Activated CD8-positive, alpha-beta T cell treated with anti-CD3 and anti-CD28 coated beads for 36 hours (primary cell): ENCODE measurements at regions of chr12 and their contacts with region 1.

Region 1: DNA sequence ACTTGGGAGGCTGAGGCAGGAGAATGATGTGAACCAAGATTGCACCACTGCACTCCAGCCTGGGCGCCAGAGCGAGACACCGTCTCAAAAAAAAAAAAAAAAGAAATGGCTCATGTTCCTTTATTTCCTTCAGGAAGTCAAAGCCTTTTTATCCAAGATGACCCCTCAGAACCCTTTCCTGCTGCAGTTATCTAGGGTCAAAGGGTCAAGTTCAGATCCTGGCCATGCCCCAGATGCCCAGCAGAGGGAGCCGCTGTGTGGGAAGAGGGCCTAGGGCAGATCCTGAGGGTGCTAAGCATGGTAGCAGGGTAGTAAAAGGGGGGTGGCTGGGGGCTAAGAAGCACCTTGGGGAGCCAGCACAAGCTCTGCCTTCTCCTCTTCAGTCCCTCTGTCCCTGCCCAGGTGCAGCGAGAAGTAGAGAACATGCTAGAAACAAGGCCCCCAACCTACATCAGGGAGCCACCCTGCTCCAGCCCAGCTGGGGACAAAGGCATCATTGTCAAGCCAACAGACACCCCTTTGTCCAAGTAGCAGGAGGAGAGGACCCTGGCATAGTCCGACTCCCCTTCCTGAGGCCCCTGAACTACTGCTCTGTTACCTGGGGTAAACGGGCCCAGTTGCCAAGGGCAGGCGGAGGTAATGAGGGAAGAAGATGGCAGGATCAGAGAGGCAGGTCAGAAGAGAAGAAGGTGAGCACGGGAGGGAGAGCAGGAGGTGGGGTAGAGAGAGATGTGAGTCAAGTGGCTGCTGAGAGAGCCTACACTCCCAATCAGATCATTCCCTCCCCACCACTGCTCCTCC is 6.5 kb downstream of the NFE2 start:
- DNase-seq: peak; percentile 77
- ATAC-seq: peak; percentile 88
- H3K4me3 Mint-ChIP-seq: no peak overlapping the region
- H3K27ac Mint-ChIP-seq: no peak overlapping the region
- H3K4me1 Mint-ChIP-seq: peaks cover 4% of the 10 kb centered on the region
- H3K27me3 Mint-ChIP-seq: peaks cover 13% of the 10 kb centered on the region
- CTCF ChIP-seq: peak; percentile 79

Region 2: GRCh38 chr12:54251667-54252284 is 42.6 kb before region 1 on chr12:
- CTCF ChIA-PET with region 1: interaction called, 12 read pairs
- POLR2A ChIA-PET with region 1: interaction called, 4 read pairs
- intact Hi-C with region 1: no loop called
- DNase-seq: peak; percentile 22
- ATAC-seq: peak; percentile 62
- H3K4me3 Mint-ChIP-seq: no peak overlapping the region
- H3K27ac Mint-ChIP-seq: no peak overlapping the region
- H3K4me1 Mint-ChIP-seq: peaks cover 11% of the 10 kb centered on the region
- H3K27me3 Mint-ChIP-seq: no peaks in the 10 kb centered on the region
- CTCF ChIP-seq: peak; percentile 49

Region 3: GRCh38 chr12:54279866-54280467 is 14.4 kb before region 1 on chr12 and contains the start of gene CBX5:
- CTCF ChIA-PET with region 1: interaction called, 16 read pairs
- POLR2A ChIA-PET with region 1: interaction called, 44 read pairs
- intact Hi-C with region 1: no loop called
- DNase-seq: peak; percentile 99
- ATAC-seq: peak; percentile 57
- H3K4me3 Mint-ChIP-seq: no peak within 1 kb of the TSS
- H3K27ac Mint-ChIP-seq: no peak within 1 kb of the TSS
- H3K4me1 Mint-ChIP-seq: peaks cover 43% of the 10 kb centered on the region
- H3K27me3 Mint-ChIP-seq: no peaks in the 10 kb centered on the region
- CTCF ChIP-seq: no peak
- total RNA-seq, gene CBX5: 125 to 128 TPM

Region 4: DNA sequence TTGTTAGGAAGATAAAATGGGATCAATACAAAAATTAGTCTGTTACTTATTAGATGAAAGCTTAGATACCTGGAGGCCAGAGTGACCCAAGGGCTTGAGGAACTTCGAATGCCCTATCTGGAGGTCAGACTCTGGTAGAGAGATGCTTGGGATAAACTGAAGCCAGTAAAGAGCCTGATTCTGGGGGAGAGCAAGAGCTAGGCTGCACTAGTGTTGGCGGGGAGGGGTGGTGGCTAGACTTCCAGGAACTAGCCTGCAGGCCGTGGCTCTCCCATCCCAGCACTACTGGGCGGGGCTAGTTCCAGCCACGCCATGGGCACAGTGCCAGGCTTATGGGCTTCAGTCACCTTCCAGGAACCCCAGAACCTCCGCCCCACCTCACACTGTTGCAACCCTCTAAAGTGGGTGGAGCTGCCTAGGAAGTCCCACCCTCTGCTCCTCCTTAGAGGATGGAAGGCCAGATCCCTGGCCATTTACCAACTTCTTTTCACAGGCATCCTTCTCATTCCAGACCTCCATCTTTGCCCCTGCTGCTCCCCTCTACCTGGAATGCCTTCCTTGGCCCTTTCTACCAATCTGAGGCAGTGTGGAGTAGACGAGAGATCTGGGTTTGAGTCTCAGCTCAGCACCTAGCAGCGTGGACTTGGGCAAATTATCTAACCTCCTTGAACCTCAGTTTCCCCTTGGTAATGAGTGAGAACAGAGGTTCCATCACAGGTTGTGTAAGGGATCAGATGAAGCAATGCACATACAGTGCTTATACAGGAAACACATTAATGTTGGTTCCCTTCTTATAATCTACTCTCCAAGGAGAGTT is 12.8 kb after region 1 on chr12:
- CTCF ChIA-PET with region 1: interaction called, 13 read pairs
- POLR2A ChIA-PET with region 1: interaction called, 6 read pairs
- intact Hi-C with region 1: no loop called
- DNase-seq: peak; percentile 44
- ATAC-seq: peak; percentile 69
- H3K4me3 Mint-ChIP-seq: no peak overlapping the region
- H3K27ac Mint-ChIP-seq: no peak overlapping the region
- H3K4me1 Mint-ChIP-seq: peaks cover 9% of the 10 kb centered on the region
- H3K27me3 Mint-ChIP-seq: peaks cover 15% of the 10 kb centered on the region
- CTCF ChIP-seq: no peak

Region 5: DNA sequence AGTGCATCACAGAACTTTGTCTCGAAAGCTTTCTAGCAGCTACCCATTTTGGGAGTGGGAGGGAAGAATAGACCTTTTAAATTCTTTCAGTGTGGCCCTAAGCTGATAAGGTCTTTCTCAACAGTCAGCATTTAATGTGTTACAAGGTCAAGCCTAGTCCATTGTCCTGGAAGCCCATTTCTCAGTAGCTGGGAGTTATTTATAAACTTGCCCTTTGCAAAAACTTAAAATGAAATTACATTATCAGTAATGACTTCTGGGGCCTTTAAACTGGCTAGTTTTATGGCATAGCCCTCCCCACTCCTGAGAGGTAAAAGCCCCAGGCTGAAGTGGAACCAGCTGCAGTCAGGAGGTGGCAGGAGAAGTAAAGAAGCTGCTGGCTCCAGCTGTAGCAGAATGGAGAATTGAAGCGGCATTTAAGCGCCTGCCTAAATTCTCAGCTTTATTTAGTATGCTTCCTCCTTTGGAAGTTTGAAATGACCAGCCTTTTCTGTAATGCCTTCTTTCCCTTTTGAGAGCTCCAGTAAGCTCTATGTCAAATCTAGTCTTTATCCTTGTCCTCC is 43.0 kb after region 1 on chr12:
- CTCF ChIA-PET with region 1: interaction called, 69 read pairs
- POLR2A ChIA-PET with region 1: interaction called, 4 read pairs
- intact Hi-C with region 1: no loop called
- DNase-seq: no peak
- ATAC-seq: no peak
- H3K4me3 Mint-ChIP-seq: no peak overlapping the region
- H3K27ac Mint-ChIP-seq: no peak overlapping the region
- H3K4me1 Mint-ChIP-seq: peaks cover 15% of the 10 kb centered on the region
- H3K27me3 Mint-ChIP-seq: no peaks in the 10 kb centered on the region
- CTCF ChIP-seq: no peak

Region 6: GRCh38 chr12:54359033-54359761 is 64.8 kb after region 1 on chr12:
- CTCF ChIA-PET with region 1: interaction called, 117 read pairs
- POLR2A ChIA-PET with region 1: interaction called, 70 read pairs
- intact Hi-C with region 1: loop called (anchors 5 kb)
- DNase-seq: peak; percentile 97
- ATAC-seq: peak; percentile 93
- H3K4me3 Mint-ChIP-seq: no peak overlapping the region
- H3K27ac Mint-ChIP-seq: no peak overlapping the region
- H3K4me1 Mint-ChIP-seq: peaks cover 17% of the 10 kb centered on the region
- H3K27me3 Mint-ChIP-seq: no peaks in the 10 kb centered on the region
- CTCF ChIP-seq: no peak